ENCODE measurements at regions of chr16 and their contacts with region 1.

Region 1: GRCh38 chr16:88737298-88738150 is 31.2 kb downstream of the CTU2 start:
- DNase-seq: no peak
- H3K4me3 ChIP-seq: no peak overlapping the region
- CTCF ChIP-seq: peak; percentile 95

Region 2: DNA sequence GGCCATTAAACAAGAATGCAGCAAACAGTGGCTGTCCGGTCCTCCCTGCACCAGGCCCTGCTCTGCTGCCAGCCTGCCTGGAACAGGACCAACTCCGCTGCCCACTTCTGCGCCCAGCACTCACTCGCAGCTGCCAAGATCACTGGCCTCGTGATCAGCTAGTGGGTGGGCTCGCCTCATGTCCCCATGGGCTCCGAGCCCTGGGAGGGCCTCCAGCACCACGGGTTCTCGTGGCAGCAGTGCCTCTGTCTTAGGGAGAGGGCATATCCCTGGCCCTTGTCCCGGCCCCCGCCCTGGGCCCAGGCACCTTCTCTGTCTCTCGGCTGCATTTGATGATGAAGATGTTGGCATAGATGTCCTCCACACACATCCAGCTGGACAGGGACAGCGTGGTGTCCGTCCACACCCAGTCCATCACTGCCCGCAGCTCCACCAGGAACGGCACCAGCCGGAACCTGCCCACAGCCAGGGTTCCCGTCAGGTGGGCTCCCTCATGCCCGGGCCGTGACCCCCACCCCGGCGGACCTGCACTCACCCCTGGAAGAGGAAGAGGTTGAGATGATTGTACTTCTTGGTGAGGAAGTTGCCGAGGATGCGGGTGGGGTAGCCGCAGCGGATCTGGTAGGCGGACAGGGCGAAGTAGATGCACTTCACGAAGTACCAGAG is 18.1 kb before region 1 on chr16:
- CTCF ChIA-PET with region 1: interaction called, 15 read pairs
- POLR2A ChIA-PET with region 1: no interaction called
- DNase-seq: no peak
- H3K4me3 ChIP-seq: no peak overlapping the region
- CTCF ChIP-seq: no peak

Region 3: DNA sequence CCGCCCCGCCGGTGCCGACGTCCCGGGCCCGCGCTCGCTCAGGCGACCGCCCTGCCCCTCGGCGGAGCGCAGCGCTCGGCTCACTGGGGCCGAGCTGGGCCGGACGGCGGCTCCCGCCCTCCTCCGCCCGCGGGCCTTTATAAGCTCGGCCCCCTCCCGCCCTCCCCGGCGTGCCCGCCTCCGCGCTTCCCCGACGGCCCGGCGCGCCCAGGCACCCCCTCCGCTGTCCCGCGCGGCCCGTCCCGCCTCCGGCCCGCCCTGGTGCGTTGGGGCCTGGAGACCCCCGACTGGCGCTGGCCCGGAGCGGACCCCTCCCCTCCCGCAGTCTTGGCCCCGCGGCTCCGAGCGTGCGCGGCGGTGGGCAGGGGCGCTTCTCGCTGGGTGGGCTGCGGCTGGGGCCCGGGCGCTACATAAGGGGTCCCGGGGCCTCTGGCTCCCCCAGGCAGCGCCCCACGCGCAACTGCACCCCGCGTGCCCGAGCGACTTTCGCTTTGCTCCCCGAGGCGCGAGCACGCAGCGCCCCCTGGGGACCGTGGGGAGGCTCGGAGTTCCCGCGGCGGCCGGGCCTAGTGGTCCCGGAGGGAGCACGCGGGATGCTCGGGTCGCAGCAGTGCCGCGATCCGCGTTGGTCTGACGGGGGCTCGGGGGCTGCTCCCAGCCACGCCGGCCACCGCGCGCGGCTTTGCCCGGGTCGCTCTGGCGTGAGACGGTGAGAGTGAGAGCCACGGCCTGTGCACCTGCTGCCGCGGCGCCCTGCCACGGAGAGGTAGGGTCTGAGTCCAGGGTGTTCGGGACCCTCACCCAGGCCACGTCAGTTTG is 47.8 kb after region 1 on chr16 and contains the start of gene PIEZO1:
- CTCF ChIA-PET with region 1: interaction called, 76 read pairs
- POLR2A ChIA-PET with region 1: interaction called, 7 read pairs
- DNase-seq: no peak
- H3K4me3 ChIP-seq: peak within 1 kb of the TSS; percentile 75
- CTCF ChIP-seq: peak; percentile 98

Region 4: DNA sequence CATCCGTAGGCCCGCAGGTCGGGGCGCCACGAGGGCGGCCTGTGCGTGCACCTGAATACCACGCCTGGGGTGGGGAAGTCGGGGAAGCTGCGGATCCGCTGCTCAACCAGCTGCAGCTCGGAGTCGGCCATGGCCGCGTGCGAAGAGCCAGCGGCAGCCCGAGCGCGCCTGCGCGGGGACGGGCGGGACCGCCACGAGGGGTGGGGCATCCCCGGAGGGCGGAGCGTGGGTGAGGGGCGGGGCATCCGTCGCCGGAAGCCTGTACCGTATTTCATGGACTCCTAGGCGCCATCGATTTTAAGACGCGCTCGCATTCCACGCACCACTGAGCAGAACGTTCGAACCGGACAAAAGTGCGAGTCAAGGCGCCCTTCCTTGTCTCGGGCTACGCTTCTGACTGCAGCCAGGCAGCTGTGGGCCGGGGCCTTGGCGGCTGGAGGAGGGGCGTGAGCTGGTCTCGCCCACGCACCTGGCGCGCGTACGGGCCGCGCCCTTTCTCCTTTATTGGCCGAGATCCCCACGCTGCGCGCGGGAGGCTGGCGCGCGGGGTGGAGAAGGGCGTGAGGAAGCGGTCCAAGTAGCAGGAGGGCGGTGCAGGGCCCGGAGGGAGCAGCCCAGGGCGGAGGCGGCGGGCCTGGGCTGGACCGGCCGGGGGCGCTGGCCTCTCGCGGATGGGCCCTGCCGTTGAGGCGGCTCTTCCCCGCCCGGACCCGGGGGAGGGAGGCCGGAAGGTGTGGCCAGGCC is 74.4 kb after region 1 on chr16 and contains the start of gene APRT:
- CTCF ChIA-PET with region 1: interaction called, 23 read pairs
- POLR2A ChIA-PET with region 1: no interaction called
- DNase-seq: peak; percentile 52
- H3K4me3 ChIP-seq: peak within 1 kb of the TSS; percentile 83
- CTCF ChIP-seq: peak; percentile 43

Region 5: DNA sequence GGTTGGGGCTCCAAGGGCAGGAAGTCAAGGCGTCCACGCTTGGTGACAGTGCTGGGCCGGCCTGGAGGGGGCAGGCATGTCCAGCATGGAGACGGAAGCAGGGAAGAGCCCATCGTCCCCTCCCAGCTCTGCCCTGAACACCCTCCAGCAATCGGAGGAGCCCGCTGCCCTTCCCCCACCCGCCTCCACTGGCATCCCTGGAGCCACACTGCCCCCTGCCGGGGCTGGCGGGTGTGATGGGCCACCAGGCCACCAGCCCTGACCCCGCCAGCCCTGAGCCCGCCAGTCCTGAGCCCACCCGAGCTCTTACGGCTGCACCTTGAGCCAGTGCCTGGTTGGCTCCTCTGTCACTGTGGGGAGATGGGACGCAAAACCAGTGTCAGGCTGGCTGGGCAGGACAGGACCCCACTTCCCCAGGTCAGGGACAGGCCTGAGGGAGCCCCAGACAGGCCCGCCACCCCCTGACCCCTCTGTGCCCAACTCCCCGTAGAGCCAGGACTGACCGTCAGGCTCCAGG is 430.0 kb after region 1 on chr16:
- CTCF ChIA-PET with region 1: interaction called, 16 read pairs
- POLR2A ChIA-PET with region 1: no interaction called
- DNase-seq: no peak
- H3K4me3 ChIP-seq: peak overlapping the region; percentile 18
- CTCF ChIP-seq: peak; percentile 90

Measured in AG04449 (cell line).